CD4-positive, alpha-beta memory T cell (primary cell): ENCODE measurements at regions of chrX and their contacts with region 1.

Region 1: DNA sequence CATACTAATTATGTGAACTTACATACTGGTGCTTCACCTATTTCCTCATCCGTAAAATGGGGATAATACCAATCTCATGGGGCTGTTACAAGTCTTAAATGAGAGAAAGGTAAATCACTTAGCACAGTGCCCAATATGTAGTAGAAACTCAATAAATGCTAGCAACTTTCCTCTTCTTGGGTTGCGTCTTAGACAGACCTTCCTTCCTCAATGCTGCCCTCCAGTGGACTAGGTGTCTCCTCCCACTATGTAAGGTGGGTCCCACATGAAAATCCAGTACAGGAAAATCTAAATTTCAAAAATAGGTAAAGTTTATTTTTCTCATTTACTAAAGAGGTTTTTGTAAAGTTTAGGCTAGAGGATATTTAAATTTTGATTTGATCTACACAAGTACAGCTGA is 20.6 kb downstream of the ZDHHC9 start:
- DNase-seq: peak; percentile 38 to 62 (median 59)
- H3K4me3 ChIP-seq: no peak overlapping the region
- H3K4me3 Mint-ChIP-seq: peak overlapping the region in 2 of 8 donors; percentile 57 to 69
- H3K27ac ChIP-seq: no peak overlapping the region
- H3K27ac Mint-ChIP-seq: peak overlapping the region in 2 of 7 donors; percentile 7 to 23
- H3K4me1 ChIP-seq: peaks cover 10% of the 10 kb centered on the region
- H3K4me1 Mint-ChIP-seq: peaks cover 9 to 19% (median 11%) of the 10 kb centered on the region in 4 donors
- H3K27me3 ChIP-seq: no peaks in the 10 kb centered on the region
- H3K27me3 Mint-ChIP-seq: no peaks in the 10 kb centered on the region

Region 2: DNA sequence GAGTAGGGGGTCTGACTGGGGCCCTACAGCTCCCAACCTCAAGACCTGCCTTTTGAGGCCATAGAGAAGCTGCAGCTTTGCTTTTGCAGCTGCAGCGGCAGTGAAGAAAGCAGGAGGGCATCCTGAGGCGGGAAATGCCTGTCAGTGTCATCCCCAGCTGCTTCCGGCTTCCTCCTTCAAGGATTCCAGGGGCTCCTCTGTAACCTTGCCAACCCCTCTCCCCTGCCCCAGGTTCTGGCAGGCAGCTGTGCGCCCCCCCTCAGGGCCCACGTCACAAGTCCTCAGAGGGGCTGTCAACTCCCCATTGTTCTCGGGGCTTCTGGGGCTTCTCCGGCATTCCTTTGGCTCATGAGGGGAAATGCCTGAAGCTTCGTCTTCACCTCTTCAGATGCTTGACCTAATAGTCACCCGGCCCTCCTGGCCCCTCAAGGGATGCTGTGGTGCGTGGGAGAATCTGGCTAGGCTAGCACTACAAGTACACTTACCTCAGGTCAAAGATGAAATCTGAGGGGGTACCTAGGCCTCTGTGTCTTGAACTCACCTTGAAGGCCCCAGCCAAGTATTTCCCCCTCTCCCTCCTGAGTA is 200.3 kb before region 1 on chrX:
- CTCF ChIA-PET with region 1: no interaction called
- POLR2A ChIA-PET with region 1: no interaction called
- intact Hi-C with region 1: no loop called
- DNase-seq: no peak
- H3K4me3 ChIP-seq: no peak overlapping the region
- H3K4me3 Mint-ChIP-seq: no peak overlapping the region
- H3K27ac ChIP-seq: no peak overlapping the region
- H3K27ac Mint-ChIP-seq: no peak overlapping the region
- H3K4me1 ChIP-seq: no peaks in the 10 kb centered on the region
- H3K4me1 Mint-ChIP-seq: peaks cover 5 to 10% (median 7%) of the 10 kb centered on the region in 4 donors
- H3K27me3 ChIP-seq: no peaks in the 10 kb centered on the region
- H3K27me3 Mint-ChIP-seq: peaks cover 0 to 2% of the 10 kb centered on the region in 2 donors

Region 3: DNA sequence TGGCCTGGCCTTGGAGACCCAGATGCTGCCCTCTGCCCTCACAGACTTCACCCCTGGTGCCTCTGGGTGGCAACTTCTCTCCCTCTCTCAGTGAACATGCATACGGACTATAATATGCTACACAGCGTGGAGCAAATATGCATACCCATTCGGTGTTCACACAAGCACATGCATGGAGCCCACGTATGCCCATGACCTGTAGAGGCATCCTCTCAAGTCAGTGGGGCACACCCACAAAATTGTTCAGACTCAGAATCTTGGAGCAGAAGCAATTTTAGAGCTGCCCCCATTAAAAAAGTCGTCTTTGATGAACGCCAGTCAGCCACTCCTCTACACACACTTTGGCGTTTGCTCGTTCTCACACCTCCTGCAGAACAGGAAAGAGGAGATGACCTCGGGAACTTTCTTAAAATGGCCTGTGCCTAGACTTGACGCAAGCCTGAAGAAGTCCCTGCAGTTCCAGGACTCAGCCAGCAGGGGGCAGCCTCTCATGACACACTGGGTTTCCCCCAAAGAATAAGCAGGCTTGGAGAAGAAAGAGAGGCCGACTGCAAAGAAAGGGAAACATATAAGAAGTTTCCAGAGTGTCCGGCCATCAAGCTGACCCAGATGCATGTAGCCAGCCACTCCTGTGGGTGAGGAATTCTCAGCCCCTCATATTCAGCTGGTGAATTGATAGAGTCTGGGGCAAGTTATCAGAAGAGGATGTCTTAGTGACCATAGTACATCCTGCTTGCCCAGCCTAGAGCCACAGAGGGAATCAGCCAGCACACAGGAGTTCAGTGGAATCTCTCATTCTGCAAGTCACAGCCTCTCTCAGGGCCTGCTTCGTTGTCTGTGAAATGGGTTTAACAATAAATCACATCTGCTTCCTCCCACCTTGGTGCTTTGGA is 185.7 kb before region 1 on chrX:
- CTCF ChIA-PET with region 1: interaction called, 48 read pairs
- POLR2A ChIA-PET with region 1: no interaction called
- intact Hi-C with region 1: loop called (anchors 1 kb)
- DNase-seq: peak; percentile 60 to 76 (median 65)
- H3K4me3 ChIP-seq: no peak overlapping the region
- H3K4me3 Mint-ChIP-seq: peak overlapping the region in 2 of 8 donors; percentile 0 to 35
- H3K27ac ChIP-seq: no peak overlapping the region
- H3K27ac Mint-ChIP-seq: peak overlapping the region in 1 of 7 donors; percentile 79
- H3K4me1 ChIP-seq: peaks cover 7% of the 10 kb centered on the region
- H3K4me1 Mint-ChIP-seq: peaks cover 0 to 12% (median 2%) of the 10 kb centered on the region in 4 donors
- H3K27me3 ChIP-seq: no peaks in the 10 kb centered on the region
- H3K27me3 Mint-ChIP-seq: no peaks in the 10 kb centered on the region

Region 4: DNA sequence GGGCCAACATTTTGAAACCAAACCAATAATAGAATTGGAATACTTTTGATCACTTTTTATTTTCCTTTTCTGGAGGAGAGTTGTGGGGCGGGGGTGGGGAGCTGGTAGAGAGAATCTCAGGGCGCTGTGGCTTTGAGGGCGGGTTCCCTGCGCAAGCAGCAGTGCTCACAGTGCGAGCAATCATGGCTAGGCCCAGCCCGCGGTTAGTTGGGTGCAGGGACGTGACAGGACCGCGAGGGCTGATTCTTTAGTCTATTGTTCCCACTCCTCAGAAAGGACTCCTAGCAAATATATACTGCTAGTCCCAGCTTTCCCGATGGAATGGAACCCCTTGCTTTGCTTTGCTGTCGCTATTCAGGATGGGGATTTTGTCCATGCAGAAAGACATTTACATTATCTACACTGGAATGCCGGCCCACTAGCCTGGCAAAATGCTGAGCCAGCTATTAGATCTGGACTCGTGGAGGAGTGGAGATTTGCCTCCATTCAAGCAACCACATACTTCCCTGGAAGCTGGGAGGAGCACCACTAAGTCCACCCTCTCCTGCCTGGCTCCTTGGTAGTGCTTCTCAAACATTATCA is 144.4 kb before region 1 on chrX:
- CTCF ChIA-PET with region 1: interaction called, 28 read pairs
- POLR2A ChIA-PET with region 1: no interaction called
- intact Hi-C with region 1: loop called (anchors 1 kb)
- DNase-seq: peak in 3 of 5 donors; percentile 38 to 66 (median 41)
- H3K4me3 ChIP-seq: peak overlapping the region; percentile 11 to 60
- H3K4me3 Mint-ChIP-seq: peak overlapping the region; percentile 75 to 88 (median 78)
- H3K27ac ChIP-seq: peak overlapping the region; percentile 43
- H3K27ac Mint-ChIP-seq: peak overlapping the region; percentile 10 to 86 (median 71)
- H3K4me1 ChIP-seq: peaks cover 10% of the 10 kb centered on the region
- H3K4me1 Mint-ChIP-seq: peaks cover 1 to 20% (median 6%) of the 10 kb centered on the region in 4 donors
- H3K27me3 ChIP-seq: no peaks in the 10 kb centered on the region
- H3K27me3 Mint-ChIP-seq: no peaks in the 10 kb centered on the region

Region 5: GRCh38 chrX:129737916-129738315 is 85.2 kb before region 1 on chrX:
- CTCF ChIA-PET with region 1: interaction called, 11 read pairs
- POLR2A ChIA-PET with region 1: no interaction called
- intact Hi-C with region 1: no loop called
- DNase-seq: no peak
- H3K4me3 ChIP-seq: no peak overlapping the region
- H3K4me3 Mint-ChIP-seq: no peak overlapping the region
- H3K27ac ChIP-seq: no peak overlapping the region
- H3K27ac Mint-ChIP-seq: peak overlapping the region in 2 of 7 donors; percentile 8 to 15
- H3K4me1 ChIP-seq: peaks cover 29% of the 10 kb centered on the region
- H3K4me1 Mint-ChIP-seq: peaks cover 14 to 42% (median 24%) of the 10 kb centered on the region in 4 donors
- H3K27me3 ChIP-seq: no peaks in the 10 kb centered on the region
- H3K27me3 Mint-ChIP-seq: no peaks in the 10 kb centered on the region

Region 6: DNA sequence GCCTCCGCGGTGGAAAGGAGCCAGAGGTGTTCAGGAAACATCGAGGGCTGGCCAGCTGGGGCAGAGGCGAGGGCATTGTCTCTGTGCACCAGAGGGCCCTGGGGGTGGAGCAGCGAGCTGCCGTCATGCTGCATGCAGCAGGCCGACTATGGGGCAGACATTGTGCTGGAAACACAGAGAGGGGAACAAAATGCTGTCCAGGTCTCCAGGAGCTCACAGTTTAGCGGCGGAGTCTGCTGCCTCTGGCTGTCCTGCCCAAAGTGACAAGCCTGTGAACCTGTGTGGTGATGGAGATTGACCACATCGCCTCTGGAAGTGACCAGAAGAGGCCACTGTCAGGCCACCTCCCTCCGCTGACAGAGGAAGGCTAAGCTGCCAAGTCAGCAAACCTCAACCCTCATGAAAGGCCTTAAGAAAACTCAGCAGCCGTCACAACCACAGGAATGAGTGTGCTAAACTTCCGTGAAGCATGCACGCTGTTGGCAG is 63.5 kb before region 1 on chrX:
- CTCF ChIA-PET with region 1: interaction called, 31 read pairs
- POLR2A ChIA-PET with region 1: interaction called, 8 read pairs
- intact Hi-C with region 1: loop called (anchors 1 kb)
- DNase-seq: peak; percentile 63 to 73 (median 69)
- H3K4me3 ChIP-seq: no peak overlapping the region
- H3K4me3 Mint-ChIP-seq: peak overlapping the region; percentile 58 to 78 (median 67)
- H3K27ac ChIP-seq: peak overlapping the region; percentile 54
- H3K27ac Mint-ChIP-seq: peak overlapping the region; percentile 84 to 95 (median 91)
- H3K4me1 ChIP-seq: peaks cover 82% of the 10 kb centered on the region
- H3K4me1 Mint-ChIP-seq: peaks cover 39 to 76% (median 56%) of the 10 kb centered on the region in 4 donors
- H3K27me3 ChIP-seq: no peaks in the 10 kb centered on the region
- H3K27me3 Mint-ChIP-seq: no peaks in the 10 kb centered on the region

Region 7: DNA sequence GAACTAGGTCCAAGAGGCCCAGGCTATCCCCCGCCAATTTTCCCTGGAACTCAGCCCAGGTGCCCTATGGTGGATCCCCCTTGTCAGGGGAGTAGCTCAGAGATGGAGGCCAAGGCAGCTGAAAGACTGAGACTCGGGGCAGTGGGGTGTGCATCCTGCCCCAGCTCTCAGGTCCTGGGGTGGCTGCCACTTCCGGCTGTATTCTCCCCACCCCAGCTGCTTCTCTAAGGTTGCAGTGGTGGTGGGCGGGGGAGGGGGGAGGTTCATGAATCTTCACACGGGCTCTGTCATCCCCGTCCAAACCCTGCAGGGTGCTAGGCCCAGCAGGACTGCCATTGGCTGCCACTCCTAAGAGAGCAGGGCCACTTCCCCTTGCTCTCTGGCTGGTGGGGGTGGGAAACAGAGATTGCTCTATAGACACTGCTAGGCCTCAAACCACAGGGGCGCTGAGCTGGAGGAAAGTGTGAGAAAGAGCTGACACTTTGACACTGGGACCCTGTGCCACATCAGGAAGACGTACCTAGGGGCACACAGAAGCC is 41.9 kb before region 1 on chrX:
- CTCF ChIA-PET with region 1: interaction called, 27 read pairs
- POLR2A ChIA-PET with region 1: interaction called, 6 read pairs
- intact Hi-C with region 1: loop called (anchors 5 kb)
- DNase-seq: peak; percentile 77 to 93 (median 83)
- H3K4me3 ChIP-seq: peak overlapping the region; percentile 75 to 86
- H3K4me3 Mint-ChIP-seq: peak overlapping the region; percentile 81 to 97 (median 88)
- H3K27ac ChIP-seq: peak overlapping the region; percentile 62
- H3K27ac Mint-ChIP-seq: peak overlapping the region; percentile 82 to 95 (median 92)
- H3K4me1 ChIP-seq: peaks cover 74% of the 10 kb centered on the region
- H3K4me1 Mint-ChIP-seq: peaks cover 42 to 89% (median 67%) of the 10 kb centered on the region in 4 donors
- H3K27me3 ChIP-seq: no peaks in the 10 kb centered on the region
- H3K27me3 Mint-ChIP-seq: no peaks in the 10 kb centered on the region